A673 (cell line): ENCODE measurements at regions of chr1 and their contacts with region 1.

Region 1: GRCh38 chr1:22983934-22984333 is 11.3 kb upstream of the LACTBL1 start:
- DNase-seq: no peak
- H3K4me3 ChIP-seq: no peak overlapping the region
- H3K27ac ChIP-seq: no peak overlapping the region
- H3K4me1 ChIP-seq: no peaks in the 10 kb centered on the region
- H3K27me3 ChIP-seq: no peaks in the 10 kb centered on the region
- CTCF ChIP-seq: no peak

Region 2: GRCh38 chr1:22749919-22750688 is 233.8 kb before region 1 on chr1:
- CTCF ChIA-PET with region 1: no interaction called
- POLR2A ChIA-PET with region 1: no interaction called
- intact Hi-C with region 1: no loop called
- DNase-seq: peak; percentile 39
- H3K4me3 ChIP-seq: no peak overlapping the region
- H3K27ac ChIP-seq: peak overlapping the region; percentile 13
- H3K4me1 ChIP-seq: no peaks in the 10 kb centered on the region
- H3K27me3 ChIP-seq: no peaks in the 10 kb centered on the region
- CTCF ChIP-seq: no peak

Region 3: DNA sequence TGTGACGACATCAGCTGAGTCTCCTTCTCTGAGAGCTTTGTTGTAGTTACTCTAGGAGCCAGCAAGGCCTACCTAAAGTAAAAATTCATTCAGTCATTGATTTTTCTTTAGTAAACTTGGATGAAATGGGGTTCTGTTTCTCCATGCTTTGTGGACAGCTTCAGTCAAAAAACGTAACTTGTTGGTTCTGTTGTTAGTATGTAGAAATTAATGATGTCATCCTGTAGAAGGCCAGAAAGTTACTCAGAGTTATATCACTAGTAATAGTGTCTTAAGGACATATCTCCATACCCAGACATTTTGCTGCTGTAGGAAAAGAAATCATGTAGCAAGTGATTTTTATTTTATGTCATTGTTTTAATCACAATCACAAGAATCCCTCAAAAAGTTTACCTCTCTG is 78.3 kb after region 1 on chr1:
- CTCF ChIA-PET with region 1: no interaction called
- POLR2A ChIA-PET with region 1: no interaction called
- intact Hi-C with region 1: loop called (anchors 10 kb)
- DNase-seq: no peak
- H3K4me3 ChIP-seq: no peak overlapping the region
- H3K27ac ChIP-seq: no peak overlapping the region
- H3K4me1 ChIP-seq: no peaks in the 10 kb centered on the region
- H3K27me3 ChIP-seq: no peaks in the 10 kb centered on the region
- CTCF ChIP-seq: no peak